K562 (cell line): ENCODE measurements at regions of chr3 and their contacts with region 1.

Region 1: DNA sequence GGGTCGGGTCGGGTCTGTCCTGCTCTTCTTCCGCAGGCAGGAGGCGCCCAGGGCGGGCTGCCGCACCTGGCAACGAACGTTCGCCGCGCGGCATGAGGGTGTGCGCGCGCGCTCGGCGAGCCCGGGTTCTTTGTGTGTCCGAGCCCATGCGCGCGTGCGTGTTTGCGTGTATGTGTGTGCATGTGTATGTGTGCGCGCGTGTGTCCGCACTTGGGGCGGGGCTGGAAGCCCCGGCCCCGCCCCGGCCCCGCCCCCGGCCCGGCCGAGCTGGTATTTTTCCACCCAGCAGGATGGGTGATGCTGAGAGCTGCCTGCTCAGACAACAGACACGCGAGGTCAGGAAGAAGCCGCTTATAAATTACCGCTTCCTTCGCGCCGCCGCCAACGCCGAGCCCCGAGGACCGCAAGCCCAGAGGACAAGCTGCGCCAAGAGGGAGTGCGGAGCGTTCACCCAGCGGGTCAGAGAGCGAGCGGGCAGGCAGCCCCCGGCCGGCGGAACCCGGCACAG is at the start of gene SLC6A6:
- DNase-seq: peak; percentile 94 to 97 (median 97)
- ATAC-seq: peak; percentile 80
- H3K4me3 ChIP-seq: peak within 1 kb of the TSS; percentile 92
- H3K27ac ChIP-seq: peak within 1 kb of the TSS; percentile 91
- H3K4me1 ChIP-seq: peaks cover 20 to 59% of the 10 kb centered on the region in 2 experiments; a peak in 4 of 5 replicates
- H3K27me3 ChIP-seq: no peaks in the 10 kb centered on the region
- CTCF ChIP-seq: peak; percentile 47 to 75 (median 64); a peak in 5 of 6 replicates
- EP300 ChIP-seq: 0 out of 2 replicates have a peak, but pooled peaks have one; percentile 14
- POLR2A ChIP-seq: peak; percentile 87
- RAD21 ChIP-seq: peak; percentile 52 to 67
- polyA plus RNA-seq, gene SLC6A6: 12.3 to 14.8 TPM

Region 2: DNA sequence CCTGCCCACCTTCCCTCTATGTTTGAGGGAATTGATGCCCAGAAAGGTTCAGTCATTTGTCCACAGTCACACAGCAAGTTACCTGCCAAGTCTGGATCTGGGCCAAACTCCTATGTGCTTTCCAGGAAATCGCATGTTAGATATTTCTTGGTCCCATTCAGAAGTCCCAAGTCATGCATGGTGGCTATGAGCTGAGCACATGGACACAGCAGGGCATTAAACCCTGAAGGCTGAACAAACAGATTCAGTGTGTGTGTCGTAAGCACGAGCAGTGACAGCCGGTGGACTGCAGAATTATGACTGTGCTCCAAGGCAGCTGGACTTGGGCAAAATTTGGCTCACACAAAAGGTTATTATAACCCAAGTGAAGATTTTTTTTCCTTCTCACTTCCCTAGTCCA is 11.3 kb before region 1 on chr3:
- CTCF ChIA-PET with region 1: no interaction called
- POLR2A ChIA-PET with region 1: interaction called, 33 read pairs
- in situ Hi-C with region 1: no loop called
- intact Hi-C with region 1: no loop called
- DNase-seq: peak in 2 of 4 experiments; percentile 40 to 56
- ATAC-seq: peak; percentile 60
- H3K4me3 ChIP-seq: no peak overlapping the region
- H3K27ac ChIP-seq: no peak overlapping the region; the same call in 2 of the 3 replicates
- H3K4me1 ChIP-seq: peaks cover 13 to 14% of the 10 kb centered on the region in 2 experiments
- H3K27me3 ChIP-seq: no peaks in the 10 kb centered on the region
- CTCF ChIP-seq: no peak
- EP300 ChIP-seq: peak; percentile 50
- POLR2A ChIP-seq: no peak
- RAD21 ChIP-seq: no peak

Region 3: DNA sequence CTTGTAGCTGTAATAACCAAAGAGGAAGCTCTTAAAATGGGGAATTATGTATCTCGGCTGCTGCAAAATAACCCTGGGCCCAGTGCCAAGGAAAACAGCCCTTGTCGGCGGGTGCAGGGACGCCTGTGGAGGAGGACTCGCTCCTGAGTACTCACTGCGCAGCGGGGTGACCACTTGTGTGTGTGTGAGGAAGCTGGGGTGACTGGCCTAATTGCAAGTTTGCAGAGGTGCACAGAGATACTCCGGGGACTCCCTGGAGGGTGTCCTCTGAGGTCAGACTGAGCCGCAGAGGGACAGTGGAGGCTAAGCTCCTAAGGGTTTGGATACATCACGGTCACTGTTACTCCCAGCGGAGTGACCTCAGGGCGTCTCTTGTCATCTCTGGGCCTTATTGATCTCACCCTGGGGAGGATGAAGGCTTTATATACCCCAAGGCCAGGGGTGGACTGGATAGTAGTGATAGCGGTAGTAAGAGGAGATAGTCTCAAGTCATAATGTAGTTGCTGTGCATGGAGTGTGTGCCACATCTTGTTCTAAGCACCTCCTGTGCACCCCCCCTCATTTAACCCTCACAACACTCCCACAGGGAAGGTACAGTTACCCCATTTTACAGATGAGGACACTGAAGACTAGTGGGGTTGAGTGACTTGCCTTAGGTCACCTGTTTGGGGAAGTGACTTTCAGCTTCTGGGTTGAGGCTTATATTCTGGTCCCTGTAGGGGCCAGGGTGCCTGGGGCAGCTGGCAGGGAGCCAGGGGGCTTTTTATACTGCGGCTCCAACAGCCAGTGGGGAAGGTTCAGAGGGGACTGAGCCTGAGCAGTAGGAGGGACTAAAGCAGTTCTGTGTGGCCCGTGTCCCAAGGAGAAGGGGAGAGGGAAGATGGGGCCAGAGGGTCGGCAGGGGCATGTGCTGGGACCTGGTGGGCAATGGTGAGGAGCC is 37.5 kb after region 1 on chr3:
- CTCF ChIA-PET with region 1: no interaction called
- POLR2A ChIA-PET with region 1: interaction called, 4 read pairs
- in situ Hi-C with region 1: no loop called
- intact Hi-C with region 1: loop called (anchors 5 kb)
- DNase-seq: peak; percentile 77 to 87 (median 82)
- ATAC-seq: peak; percentile 84
- H3K4me3 ChIP-seq: no peak overlapping the region
- H3K27ac ChIP-seq: peak overlapping the region; percentile 50; the same call in 2 of the 3 replicates
- H3K4me1 ChIP-seq: peaks cover 29 to 59% of the 10 kb centered on the region in 2 experiments
- H3K27me3 ChIP-seq: no peaks in the 10 kb centered on the region
- CTCF ChIP-seq: no peak
- EP300 ChIP-seq: peak; percentile 32; the same call in 1 of the 2 replicates
- POLR2A ChIP-seq: no peak
- RAD21 ChIP-seq: no peak; a peak in 1 of 4 replicates

Region 4: GRCh38 chr3:14461748-14462324 is 59.5 kb after region 1 on chr3:
- CTCF ChIA-PET with region 1: interaction called, 5 read pairs
- POLR2A ChIA-PET with region 1: interaction called, 3 read pairs
- in situ Hi-C with region 1: no loop called
- intact Hi-C with region 1: loop called (anchors 2 kb)
- DNase-seq: peak in 3 of 4 experiments; percentile 41 to 51 (median 42)
- ATAC-seq: peak; percentile 65
- H3K4me3 ChIP-seq: no peak overlapping the region
- H3K27ac ChIP-seq: no peak overlapping the region
- H3K4me1 ChIP-seq: peaks cover 9 to 12% of the 10 kb centered on the region in 2 experiments; a peak in 3 of 5 replicates
- H3K27me3 ChIP-seq: no peaks in the 10 kb centered on the region
- CTCF ChIP-seq: peak; percentile 73 to 98 (median 97)
- EP300 ChIP-seq: no peak
- POLR2A ChIP-seq: no peak
- RAD21 ChIP-seq: peak; percentile 88 to 93